ENCODE measurements at regions of chr2 and their contacts with region 1.

Region 1: GRCh38 chr2:73212448-73213176 is 1.4 kb upstream of the SMYD5 start:
- DNase-seq: peak; percentile 65
- H3K4me3 ChIP-seq: no peak overlapping the region
- CTCF ChIP-seq: peak; percentile 96

Region 2: DNA sequence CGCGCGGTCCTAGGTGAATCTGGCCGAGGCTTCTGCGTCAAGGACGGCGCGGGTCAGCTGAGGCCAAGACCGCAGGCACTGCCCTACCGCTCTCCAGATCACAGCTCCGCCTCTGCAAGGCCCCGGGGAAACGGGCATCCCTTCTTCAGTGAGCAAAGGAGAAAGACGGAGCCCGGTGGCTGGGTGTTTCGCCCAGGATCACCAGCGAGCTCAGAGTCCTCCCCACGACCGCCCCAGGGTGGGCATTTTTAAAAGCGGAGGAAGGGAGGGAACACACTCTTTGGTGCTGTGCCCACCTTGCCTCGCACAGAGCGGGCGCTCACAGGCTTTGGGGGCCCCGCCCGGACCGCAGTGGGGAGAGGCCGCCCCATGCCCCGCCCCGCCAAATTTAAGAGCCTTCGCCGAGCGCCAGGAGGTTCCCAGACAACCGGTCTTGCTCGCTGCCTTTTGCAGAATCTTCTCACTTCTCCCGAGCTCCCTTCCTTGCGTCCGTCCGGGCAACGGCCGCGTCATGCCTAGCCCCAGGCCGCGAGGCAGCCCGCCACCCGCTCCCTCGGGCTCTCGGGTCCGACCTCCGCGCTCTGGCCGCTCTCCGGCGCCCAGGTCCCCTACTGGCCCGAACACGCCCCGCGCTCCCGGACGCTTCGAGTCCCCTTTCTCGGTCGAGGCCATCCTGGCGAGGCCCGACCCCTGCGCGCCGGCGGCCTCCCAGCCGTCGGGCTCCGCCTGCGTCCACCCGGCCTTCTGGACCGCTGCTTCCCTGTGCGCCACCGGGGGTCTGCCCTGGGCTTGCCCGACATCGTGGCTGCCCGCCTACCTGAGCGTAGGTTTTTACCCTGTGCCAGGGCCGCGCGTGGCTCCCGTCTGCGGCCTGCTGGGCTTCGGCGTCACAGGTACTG is 10.2 kb before region 1 on chr2 and contains the start of gene NOTO:
- CTCF ChIA-PET with region 1: interaction called, 28 read pairs
- POLR2A ChIA-PET with region 1: no interaction called
- DNase-seq: no peak
- H3K4me3 ChIP-seq: peak within 1 kb of the TSS; percentile 16
- CTCF ChIP-seq: no peak

Region 3: DNA sequence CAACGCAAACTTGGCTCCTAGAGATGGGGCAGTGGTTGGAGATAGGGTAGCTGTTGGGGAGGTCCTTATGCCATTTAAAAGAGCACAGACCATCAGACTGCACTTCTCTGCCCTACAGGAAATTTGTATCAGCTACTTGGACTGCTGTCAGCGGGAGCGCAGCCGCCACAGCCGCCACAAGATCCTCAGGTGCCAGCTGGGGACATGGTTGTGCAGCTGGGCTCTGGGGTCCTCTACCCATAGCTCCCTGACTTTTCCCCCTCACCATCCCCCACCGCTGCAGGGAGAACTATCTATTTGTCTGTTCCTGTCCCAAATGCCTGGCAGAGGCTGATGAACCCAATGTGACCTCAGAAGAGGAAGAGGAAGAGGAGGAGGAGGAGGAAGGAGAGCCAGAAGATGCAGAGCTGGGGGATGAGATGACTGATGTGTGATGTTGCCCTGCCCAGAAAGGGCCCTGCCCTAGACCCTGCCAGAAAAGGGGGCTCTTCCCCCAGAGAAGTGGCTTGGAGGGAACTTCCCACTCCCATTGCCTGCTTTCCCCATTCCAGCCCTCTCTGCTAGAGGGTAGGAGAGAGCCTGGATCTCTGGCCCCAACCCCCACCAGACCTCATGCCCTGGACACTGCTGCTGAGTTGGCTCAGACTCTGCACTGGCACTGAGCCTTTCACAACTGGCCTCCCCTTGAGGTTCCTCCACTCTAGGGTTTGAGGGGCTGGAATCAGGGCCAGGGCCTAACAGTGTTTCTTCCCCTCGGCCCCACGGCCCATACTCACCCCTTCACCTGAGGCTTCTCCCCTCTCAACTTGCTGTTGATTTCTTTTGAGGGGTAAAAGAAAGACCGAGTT is 13.1 kb after region 1 on chr2:
- CTCF ChIA-PET with region 1: interaction called, 23 read pairs
- POLR2A ChIA-PET with region 1: no interaction called
- DNase-seq: no peak
- H3K4me3 ChIP-seq: no peak overlapping the region
- CTCF ChIP-seq: no peak

Region 4: DNA sequence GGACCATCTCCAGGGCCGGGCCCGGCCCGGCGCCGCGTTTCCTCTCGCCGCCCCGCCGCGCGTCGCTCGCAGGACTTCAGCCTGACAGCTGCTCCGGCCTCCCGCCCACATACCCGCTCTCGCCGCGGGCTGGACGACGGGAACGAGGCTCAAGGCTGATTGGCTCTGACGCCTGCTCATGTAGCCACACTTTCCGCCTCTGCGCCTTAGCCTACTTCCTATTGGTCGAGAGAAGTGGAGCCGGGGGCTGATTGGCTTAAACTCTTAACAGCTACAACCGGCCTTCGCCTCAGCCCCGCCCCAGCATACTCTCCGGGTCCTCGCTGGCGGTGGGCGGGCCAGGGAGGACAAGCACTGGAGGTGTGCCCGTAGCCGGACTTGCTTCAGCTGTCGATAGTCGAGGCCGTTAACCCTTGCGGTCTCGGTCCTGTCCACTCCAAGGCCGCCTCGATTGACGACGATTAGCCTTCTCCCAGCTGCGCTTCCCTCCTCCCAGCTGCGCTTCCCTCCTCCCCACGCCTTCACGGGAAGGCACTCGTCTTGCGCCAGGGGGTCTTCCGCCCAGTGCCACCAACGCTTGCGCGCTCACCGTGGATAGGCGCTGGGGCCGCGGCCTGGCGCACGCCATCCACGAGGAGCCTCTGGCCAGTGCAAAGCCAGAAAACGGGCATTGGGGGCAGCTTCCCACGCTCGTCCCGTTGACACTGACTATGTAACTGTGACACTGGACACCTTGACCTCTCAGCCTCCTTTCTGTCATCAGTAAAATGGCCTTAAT is 20.7 kb after region 1 on chr2 and contains the start of gene PRADC1:
- CTCF ChIA-PET with region 1: interaction called, 35 read pairs
- POLR2A ChIA-PET with region 1: interaction called, 8 read pairs
- DNase-seq: peak; percentile 97
- H3K4me3 ChIP-seq: peak within 1 kb of the TSS; percentile 93
- CTCF ChIP-seq: no peak

Region 5: DNA sequence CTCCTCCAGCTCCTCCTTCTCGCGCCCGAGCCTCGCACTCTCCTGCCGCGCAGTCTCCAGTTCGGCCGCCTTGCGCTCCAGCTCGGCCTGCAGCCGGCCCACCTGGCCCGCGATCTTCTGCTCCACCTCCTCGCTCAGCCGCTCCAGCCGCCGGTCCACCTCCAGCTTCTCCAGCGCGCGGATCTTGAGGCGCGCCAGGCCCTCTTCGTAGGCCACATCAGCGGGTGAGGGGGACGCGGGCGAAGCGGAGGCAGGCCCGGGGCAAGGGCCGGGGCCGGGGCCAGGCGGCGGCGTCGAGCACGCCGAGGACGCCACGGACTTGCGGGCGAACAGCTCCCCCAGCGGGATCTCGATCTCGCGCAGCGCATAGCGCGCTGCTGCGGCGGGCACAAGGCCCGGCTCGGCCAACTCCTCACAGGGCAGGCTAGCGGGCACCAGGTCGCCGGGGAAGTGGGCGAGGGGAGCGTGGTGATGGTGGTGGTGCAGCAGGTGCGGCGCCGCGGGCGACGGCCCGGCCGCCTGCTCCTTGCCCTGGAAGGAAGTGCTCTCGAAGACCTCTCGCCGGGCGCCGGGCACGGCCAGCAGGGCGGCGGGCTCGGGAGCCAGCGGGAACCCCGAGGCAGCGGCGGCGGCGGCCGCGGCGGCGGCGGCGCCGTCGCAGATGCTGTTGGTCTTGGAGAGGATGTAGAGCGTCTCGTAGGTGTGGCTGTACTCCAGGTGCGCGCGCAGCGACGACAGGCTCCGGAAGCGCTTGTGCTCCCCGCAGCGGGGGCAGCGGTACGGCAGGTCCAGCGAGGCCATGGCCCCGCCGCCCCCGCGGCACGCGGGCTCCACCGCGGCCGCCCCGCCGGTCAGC is 56.4 kb after region 1 on chr2:
- CTCF ChIA-PET with region 1: no interaction called
- POLR2A ChIA-PET with region 1: no interaction called
- DNase-seq: no peak
- H3K4me3 ChIP-seq: peak overlapping the region; percentile 20
- CTCF ChIP-seq: peak; percentile 6

Measured in AG04449 (cell line).